Panc1 (cell line): ENCODE measurements at regions of chr5 and their contacts with region 1.

Region 1: DNA sequence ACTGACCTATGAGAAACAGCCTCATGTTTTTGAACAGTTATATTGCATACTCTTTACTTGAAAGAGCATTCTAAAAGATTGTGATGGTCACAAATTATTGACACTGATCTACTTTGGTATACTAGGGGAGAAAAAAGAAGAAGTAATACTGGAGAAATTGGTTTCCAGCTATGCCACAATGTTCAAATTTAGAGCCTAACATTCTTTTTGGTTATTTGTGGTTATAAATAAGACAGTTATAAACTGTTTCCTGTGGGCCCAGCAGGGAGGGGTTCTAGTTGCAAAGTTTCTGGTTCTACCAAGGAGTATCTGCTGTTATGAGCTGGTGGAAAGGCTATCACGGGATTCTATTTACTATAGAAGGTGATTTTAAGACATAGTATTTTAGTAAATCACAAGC is 4.8 kb downstream of the CWC27 start:
- DNase-seq: no peak
- ATAC-seq: no peak
- H3K4me3 ChIP-seq: no peak overlapping the region
- H3K27ac ChIP-seq: no peak overlapping the region
- H3K4me1 ChIP-seq: peaks cover 8% of the 10 kb centered on the region; the same call in 1 of the 2 replicates
- H3K27me3 ChIP-seq: no peaks in the 10 kb centered on the region
- CTCF ChIP-seq: no peak

Region 2: GRCh38 chr5:64180661-64181343 is 592.7 kb before region 1 on chr5:
- CTCF ChIA-PET with region 1: interaction called, 10 read pairs
- POLR2A ChIA-PET with region 1: no interaction called
- in situ Hi-C with region 1: no loop called
- intact Hi-C with region 1: no loop called
- DNase-seq: no peak
- ATAC-seq: no peak
- H3K4me3 ChIP-seq: no peak overlapping the region
- H3K27ac ChIP-seq: no peak overlapping the region
- H3K4me1 ChIP-seq: no peaks in the 10 kb centered on the region
- H3K27me3 ChIP-seq: no peaks in the 10 kb centered on the region
- CTCF ChIP-seq: no peak